ENCODE measurements at regions of chr19 and their contacts with region 1.

Region 1: DNA sequence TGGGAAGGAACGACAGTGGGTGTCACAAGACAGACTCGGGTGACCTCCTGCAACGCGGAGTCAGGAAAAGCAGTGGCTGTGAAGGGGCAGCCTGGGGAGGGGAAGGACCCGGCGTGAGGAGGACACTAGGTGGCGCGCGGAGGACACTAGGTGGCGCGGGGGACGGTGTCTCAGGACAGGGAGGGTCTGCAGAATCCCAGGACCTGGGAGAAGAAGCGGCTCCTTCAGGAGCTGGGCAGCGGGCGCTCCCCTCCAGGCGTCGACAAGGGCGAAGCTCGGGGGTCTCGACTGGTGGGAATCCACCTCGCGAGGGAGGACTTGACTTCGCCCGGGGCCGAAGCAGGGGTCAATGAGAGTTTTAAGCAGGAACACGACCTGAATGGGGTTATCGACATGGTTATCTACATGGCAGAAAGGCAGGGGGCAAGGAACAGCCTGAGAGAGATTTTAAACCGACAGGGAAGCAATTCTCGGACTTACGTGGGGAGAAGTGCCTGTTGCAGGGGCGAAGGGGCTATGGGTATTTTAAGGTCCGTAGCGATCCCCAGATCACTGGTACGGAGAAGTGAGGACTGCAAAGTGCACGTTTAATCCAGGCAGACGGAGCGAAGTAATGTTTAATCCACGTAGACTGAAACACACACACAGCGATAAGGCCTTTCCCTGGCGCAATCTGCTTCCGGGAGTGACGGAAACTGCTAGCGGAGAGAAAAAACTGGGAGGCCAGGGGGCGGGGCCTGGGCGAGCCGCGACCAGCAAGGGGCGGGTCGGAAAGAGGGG is at the start of gene ZNF616:
- DNase-seq: peak; percentile 94
- H3K4me3 Mint-ChIP-seq: peak within 1 kb of the TSS; percentile 98
- H3K27ac Mint-ChIP-seq: peak within 1 kb of the TSS; percentile 94
- H3K4me1 Mint-ChIP-seq: peaks cover 23% of the 10 kb centered on the region
- H3K27me3 Mint-ChIP-seq: no peaks in the 10 kb centered on the region
- total RNA-seq, gene ZNF616: 4.1 and 6.7 TPM in 2 replicates

Region 2: GRCh38 chr19:52095172-52096014 is 44.0 kb before region 1 on chr19 and contains the start of gene ZNF841:
- intact Hi-C with region 1: loop called (anchors 1 kb)
- DNase-seq: peak; percentile 81
- H3K4me3 Mint-ChIP-seq: peak within 1 kb of the TSS; percentile 92
- H3K27ac Mint-ChIP-seq: peak within 1 kb of the TSS; percentile 90
- H3K4me1 Mint-ChIP-seq: peaks cover 22% of the 10 kb centered on the region
- H3K27me3 Mint-ChIP-seq: no peaks in the 10 kb centered on the region
- total RNA-seq, gene ZNF841: 13.7 and 16.1 TPM in 2 replicates

Region 3: DNA sequence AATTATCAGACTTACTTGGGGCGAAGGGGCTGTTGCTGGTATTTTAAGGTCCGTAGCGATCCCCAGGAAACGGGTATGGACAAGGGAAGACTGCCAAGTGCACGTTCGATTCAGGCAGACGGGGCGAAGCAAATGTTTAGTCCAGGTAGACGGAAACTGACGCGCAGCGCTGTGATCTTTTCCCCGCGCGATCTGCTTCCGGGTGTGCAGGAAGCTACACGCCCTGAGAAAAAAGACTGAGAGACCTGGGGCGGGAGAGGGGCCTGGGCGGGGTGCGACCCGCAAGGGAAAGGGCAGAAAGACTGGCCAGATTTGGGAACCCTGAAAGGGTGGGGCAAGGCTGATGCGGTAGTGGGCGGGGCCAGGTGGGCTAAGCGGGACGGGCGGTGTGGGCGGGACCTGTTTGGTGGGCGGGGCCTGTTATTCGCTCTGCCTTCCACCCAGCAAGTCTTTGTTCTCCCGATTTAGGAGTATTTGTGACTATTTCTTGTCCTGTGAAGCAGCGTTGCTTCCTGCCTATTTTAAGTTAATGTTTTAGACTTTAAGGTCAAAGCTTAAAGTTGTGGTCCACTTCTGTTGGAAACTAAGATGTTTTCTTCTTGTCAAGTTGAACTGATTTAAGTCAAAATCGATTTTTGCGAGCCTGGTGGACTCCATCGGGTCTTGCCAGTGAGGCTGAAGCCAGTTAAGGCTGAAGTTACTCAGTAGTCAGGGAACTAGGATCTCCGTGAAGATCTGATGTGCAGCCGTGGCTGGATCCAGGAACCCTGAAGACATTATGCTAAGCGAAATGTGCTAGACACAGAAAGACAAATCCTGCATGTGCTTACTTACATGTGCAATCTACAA is 32.1 kb after region 1 on chr19 and contains the start of gene ZNF836:
- intact Hi-C with region 1: loop called (anchors 1 kb)
- DNase-seq: peak; percentile 83
- H3K4me3 Mint-ChIP-seq: peak within 1 kb of the TSS; percentile 97
- H3K27ac Mint-ChIP-seq: peak within 1 kb of the TSS; percentile 90
- H3K4me1 Mint-ChIP-seq: peaks cover 11% of the 10 kb centered on the region
- H3K27me3 Mint-ChIP-seq: no peaks in the 10 kb centered on the region
- total RNA-seq, gene ZNF836: 7.8 and 10.8 TPM in 2 replicates

Region 4: GRCh38 chr19:52237771-52238400 is 98.4 kb after region 1 on chr19:
- intact Hi-C with region 1: loop called (anchors 1 kb)
- DNase-seq: peak; percentile 34
- H3K4me3 Mint-ChIP-seq: no peak overlapping the region
- H3K27ac Mint-ChIP-seq: no peak overlapping the region
- H3K4me1 Mint-ChIP-seq: no peaks in the 10 kb centered on the region
- H3K27me3 Mint-ChIP-seq: peaks cover 1% of the 10 kb centered on the region

Measured in activated T-helper 1 cell treated with anti-CD3 and anti-CD28 coated beads, Interleukin-12 subunit alpha, Interleukin-12 subunit beta, Interleukin-2, Interleukin-4 antibody, amounts not matched to agents 30 ng/mL and 10 ng/mL and 1 ng/mL, durations not matched to agents 14 hours and 24 hours and 36 hours (primary cell).